Keratinocyte (primary cell): ENCODE measurements at regions of chr7 and their contacts with region 1.

Region 1: DNA sequence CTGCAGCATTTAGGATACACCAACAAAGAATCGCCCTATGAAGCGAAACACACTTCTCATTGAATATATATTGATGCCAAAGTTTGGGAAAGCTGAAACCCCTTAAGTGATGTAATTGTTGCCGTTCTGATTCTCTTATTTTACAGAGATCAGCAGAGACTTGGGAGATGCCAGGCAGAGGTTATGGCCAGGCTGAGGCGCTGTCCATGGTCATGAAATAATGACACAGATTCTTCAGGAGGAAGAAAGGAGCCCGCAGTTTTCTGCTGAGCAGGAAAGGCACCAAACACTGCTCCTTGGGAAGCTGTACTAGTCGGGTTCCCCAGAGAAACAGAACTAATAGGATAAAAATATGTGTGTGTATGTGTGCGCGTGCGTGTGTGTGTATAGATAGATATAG is 566.0 kb downstream of the CALN1 start:
- DNase-seq: no peak
- H3K4me3 ChIP-seq: no peak overlapping the region
- H3K27ac ChIP-seq: no peak overlapping the region
- H3K4me1 ChIP-seq: no peaks in the 10 kb centered on the region
- H3K27me3 ChIP-seq: no peaks in the 10 kb centered on the region
- CTCF ChIP-seq: no peak

Region 2: GRCh38 chr7:71723859-71724258 is 122.3 kb before region 1 on chr7:
- dilution Hi-C with region 1: no loop called
- DNase-seq: no peak
- H3K4me3 ChIP-seq: no peak overlapping the region
- H3K27ac ChIP-seq: no peak overlapping the region
- H3K4me1 ChIP-seq: no peaks in the 10 kb centered on the region
- H3K27me3 ChIP-seq: no peaks in the 10 kb centered on the region
- CTCF ChIP-seq: no peak

Region 3: GRCh38 chr7:71925663-71926062 is 79.5 kb after region 1 on chr7:
- dilution Hi-C with region 1: loop called (anchors 25 kb)
- DNase-seq: no peak
- H3K4me3 ChIP-seq: no peak overlapping the region
- H3K27ac ChIP-seq: no peak overlapping the region
- H3K4me1 ChIP-seq: no peaks in the 10 kb centered on the region
- H3K27me3 ChIP-seq: no peaks in the 10 kb centered on the region
- CTCF ChIP-seq: peak in 2 of 3 experiments; percentile 2 to 19